Activated T-helper 2 cell treated with anti-CD3 and anti-CD28 coated beads, Interferon-gamma antibody, Interleukin-2, Interleukin-4, amounts not matched to agents 10 μg/mL and 5 μg/mL and 100 μg/mL, durations not matched to agents 14 hours and 24 hours and 36 hours (primary cell): ENCODE measurements at regions of chr1 and their contacts with region 1.

Region 1: DNA sequence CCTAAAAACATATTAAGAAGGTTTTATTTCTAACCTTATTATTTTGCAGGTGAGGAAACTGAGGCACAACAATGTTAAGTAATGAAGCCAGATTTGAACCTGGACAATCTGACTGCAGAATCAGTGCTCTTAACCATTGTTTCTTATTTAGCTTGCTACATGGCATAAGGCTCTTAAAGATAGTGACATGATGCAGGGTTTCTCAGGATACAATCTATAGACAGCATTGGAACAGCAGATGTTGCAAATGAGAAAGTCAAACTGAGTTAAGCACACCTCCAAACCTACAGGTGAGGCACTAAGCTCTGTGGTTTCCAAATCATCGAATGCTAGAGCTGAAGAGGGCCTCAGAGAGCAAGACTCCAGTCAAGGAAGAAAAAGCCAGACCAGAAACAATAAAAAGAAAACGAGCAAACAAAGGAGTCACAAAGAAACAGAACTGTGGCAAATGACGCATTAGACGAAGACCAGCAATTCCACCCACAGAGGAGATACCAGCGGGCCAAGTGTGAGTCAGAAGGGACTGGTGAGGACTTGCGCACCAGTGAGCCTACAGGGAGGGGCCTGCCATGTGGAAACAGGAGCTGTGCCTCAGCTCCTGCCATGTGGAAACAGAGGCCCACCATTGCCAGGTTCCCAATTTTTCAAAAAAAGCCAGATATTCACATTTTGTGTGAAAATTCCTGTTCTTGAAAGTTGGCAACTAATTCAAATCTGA is 14.4 kb downstream of the CD58 start:
- DNase-seq: peak; percentile 63
- H3K4me3 Mint-ChIP-seq: peak overlapping the region; percentile 2
- H3K27ac Mint-ChIP-seq: peak overlapping the region; percentile 93
- H3K4me1 Mint-ChIP-seq: peaks cover 75% of the 10 kb centered on the region
- H3K27me3 Mint-ChIP-seq: no peaks in the 10 kb centered on the region

Region 2: DNA sequence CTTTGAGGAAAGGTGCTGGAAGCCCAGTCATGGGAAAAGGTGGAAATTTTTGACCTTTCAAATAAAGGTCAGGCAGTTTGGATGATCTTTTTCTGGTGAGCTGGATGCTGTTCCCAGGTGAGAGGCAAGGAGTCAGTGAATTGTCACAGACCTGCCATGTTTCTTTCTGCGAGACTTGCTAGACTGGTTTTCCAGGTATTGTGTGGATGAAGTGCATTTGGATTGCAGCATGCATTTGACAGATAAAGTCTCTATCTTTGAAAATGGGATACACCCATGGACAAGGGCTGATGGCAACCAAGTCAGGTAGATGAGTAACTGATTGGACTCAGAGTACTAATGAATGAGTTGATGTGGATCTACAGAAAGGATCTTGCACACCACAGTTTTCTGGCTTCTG is 649.8 kb before region 1 on chr1:
- intact Hi-C with region 1: no loop called
- DNase-seq: no peak
- H3K4me3 Mint-ChIP-seq: no peak overlapping the region
- H3K27ac Mint-ChIP-seq: no peak overlapping the region
- H3K4me1 Mint-ChIP-seq: peaks cover 3% of the 10 kb centered on the region
- H3K27me3 Mint-ChIP-seq: peaks cover 23% of the 10 kb centered on the region

Region 3: GRCh38 chr1:116104667-116105205 is 451.7 kb before region 1 on chr1:
- intact Hi-C with region 1: no loop called
- DNase-seq: no peak
- H3K4me3 Mint-ChIP-seq: no peak overlapping the region
- H3K27ac Mint-ChIP-seq: no peak overlapping the region
- H3K4me1 Mint-ChIP-seq: no peaks in the 10 kb centered on the region
- H3K27me3 Mint-ChIP-seq: peaks cover 7% of the 10 kb centered on the region

Region 4: DNA sequence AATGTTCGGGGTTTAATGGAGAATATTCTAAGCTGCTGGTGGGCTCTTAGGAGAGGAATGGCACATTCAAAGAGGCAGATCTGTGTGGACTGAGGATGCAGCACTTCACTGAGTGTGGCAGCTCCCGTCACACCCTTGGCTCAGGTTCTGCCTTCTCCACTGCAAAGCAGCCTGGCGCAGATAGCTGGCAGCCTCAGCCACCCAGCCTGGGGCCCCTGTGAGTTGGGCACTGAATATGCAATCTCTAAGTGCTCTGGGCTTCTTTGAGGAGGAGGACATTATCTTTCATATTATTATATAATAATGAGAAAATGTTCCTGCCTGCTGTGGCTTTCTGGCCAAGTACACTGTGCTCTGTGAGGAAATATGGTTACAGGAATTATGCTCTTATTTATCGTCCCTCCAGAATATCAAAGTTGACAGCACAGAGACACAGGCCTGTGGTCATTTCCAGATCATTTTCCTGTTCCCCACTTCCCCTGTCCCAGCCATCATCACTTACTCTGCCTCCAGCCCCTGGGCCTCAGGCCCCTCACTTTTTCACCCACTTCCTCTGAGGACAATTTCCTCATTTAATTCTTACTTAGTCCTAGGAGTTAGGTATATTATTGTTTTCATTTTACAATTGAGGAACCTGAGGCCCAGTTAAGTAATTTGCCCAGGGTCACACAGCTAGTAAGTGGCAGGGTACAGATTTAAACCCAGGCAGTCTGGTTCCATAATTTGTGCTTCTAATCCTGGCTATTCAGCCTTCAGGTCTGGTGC is 391.7 kb before region 1 on chr1:
- intact Hi-C with region 1: no loop called
- DNase-seq: peak; percentile 3
- H3K4me3 Mint-ChIP-seq: no peak overlapping the region
- H3K27ac Mint-ChIP-seq: no peak overlapping the region
- H3K4me1 Mint-ChIP-seq: peaks cover 6% of the 10 kb centered on the region
- H3K27me3 Mint-ChIP-seq: peaks cover 12% of the 10 kb centered on the region

Region 5: GRCh38 chr1:116465845-116466685 is 90.4 kb before region 1 on chr1:
- intact Hi-C with region 1: no loop called
- DNase-seq: no peak
- H3K4me3 Mint-ChIP-seq: no peak overlapping the region
- H3K27ac Mint-ChIP-seq: no peak overlapping the region
- H3K4me1 Mint-ChIP-seq: no peaks in the 10 kb centered on the region
- H3K27me3 Mint-ChIP-seq: peaks cover 21% of the 10 kb centered on the region

Region 6: DNA sequence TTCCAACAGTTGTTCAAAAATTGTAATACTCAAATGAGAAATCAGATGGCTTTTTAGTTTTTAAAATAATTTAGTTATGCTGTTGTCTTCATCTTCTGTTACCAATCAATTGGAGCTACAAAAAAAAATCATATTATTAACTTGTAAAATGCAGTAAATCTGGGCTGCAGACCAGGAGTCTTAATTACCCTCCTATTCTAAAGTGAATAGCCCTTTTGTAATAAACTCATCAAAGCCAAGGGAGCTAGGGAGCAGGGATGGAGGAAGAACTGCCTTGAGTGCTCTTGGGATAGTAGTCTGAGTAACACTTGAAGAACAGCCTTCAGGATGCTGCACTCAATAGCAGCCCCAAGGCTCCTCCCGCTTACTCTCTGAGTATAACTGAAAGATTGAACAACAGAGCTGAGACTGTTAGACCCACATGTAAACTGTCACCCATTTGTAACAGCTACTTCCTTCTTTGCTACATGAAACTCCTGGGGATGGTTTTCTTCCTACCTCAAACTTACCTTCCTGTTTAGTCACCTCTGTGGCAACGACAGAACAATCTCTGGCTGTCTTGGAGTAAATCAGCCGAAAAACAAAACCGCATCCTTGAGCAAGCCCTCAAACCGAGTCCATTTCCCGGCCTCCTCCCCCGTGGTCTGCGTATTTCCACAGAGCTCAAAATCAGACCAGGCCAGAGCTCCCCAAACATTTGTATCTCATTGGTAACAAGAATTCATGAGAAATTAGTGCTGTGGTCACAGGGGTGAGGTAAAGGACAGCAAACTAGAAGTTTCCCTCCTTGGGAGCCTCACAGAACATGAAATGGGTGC is 41.5 kb before region 1 on chr1:
- intact Hi-C with region 1: loop called (anchors 2 kb)
- DNase-seq: peak; percentile 68
- H3K4me3 Mint-ChIP-seq: peak overlapping the region; percentile 50
- H3K27ac Mint-ChIP-seq: peak overlapping the region; percentile 94
- H3K4me1 Mint-ChIP-seq: peaks cover 63% of the 10 kb centered on the region
- H3K27me3 Mint-ChIP-seq: no peaks in the 10 kb centered on the region

Region 7: DNA sequence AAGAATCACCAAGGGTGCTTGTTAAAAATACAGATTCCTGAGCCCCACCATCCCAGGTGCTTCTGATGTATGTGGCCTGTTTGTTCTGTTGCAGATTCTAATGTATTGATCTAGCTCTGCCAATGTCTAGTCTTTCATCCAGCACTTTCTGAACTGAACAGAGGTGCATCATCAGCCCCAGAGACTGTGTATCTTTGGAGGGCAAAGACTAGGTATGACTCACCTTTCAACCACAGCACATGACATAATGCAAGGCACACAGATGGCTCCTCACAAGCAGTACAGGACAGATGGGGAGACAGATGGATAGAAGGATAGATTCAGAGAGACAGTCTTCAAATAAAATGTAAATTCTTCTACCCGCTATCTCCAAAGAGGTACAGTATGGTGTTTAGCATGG is 17.9 kb before region 1 on chr1:
- intact Hi-C with region 1: loop called (anchors 2 kb)
- DNase-seq: peak; percentile 40
- H3K4me3 Mint-ChIP-seq: no peak overlapping the region
- H3K27ac Mint-ChIP-seq: peak overlapping the region; percentile 62
- H3K4me1 Mint-ChIP-seq: peaks cover 54% of the 10 kb centered on the region
- H3K27me3 Mint-ChIP-seq: no peaks in the 10 kb centered on the region

Region 8: GRCh38 chr1:116544588-116545358 is 11.7 kb before region 1 on chr1:
- intact Hi-C with region 1: loop called (anchors 1 kb)
- DNase-seq: no peak
- H3K4me3 Mint-ChIP-seq: peak overlapping the region; percentile 69
- H3K27ac Mint-ChIP-seq: peak overlapping the region; percentile 98
- H3K4me1 Mint-ChIP-seq: peaks cover 71% of the 10 kb centered on the region
- H3K27me3 Mint-ChIP-seq: no peaks in the 10 kb centered on the region

Region 9: DNA sequence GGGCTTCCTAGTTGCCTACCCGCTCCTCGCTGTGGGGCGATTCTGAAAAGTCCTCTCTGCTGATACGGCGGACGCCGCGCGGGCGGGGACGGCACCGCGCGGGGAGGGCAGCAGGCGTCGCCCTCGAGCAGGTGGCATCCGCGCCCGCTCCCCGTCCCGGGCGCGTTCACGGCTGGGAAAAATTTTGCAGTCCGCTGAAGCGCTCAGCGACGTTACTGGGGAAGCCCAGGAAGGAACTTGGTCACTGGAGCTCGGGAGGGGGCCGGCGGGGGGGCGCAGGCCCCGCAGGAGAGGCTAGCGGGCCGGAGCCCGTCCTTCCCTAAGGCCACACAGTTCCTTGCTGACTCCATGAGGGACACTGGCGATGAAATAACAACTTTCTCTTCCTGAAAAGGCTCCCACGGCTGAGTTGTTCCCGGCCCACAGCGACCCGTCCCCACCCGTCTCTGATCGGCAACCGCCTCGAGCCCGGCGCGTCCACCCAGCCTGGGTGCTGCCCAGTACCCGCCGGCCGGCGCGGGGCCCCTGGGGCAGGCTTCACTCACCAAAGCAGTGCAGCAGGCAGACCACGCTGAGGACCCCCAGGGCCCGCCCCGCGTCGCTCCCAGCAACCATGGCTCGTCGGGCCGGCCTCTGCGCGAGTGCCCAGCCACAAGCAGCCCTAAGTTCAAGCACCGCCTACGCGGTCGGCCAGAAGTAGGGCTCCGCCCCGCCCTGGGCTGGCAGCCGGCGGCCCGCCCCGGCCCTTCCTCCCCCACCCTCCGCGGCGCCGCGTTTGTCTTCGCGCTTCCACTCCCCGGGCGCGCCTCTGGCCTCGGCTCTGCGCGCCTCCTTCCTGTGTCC is 14.1 kb after region 1 on chr1 and contains the start of gene CD58:
- intact Hi-C with region 1: loop called (anchors 1 kb)
- DNase-seq: peak; percentile 78
- H3K4me3 Mint-ChIP-seq: peak within 1 kb of the TSS; percentile 97
- H3K27ac Mint-ChIP-seq: peak within 1 kb of the TSS; percentile 91
- H3K4me1 Mint-ChIP-seq: peaks cover 65% of the 10 kb centered on the region
- H3K27me3 Mint-ChIP-seq: no peaks in the 10 kb centered on the region
- total RNA-seq, gene CD58: 40.6 and 40.9 TPM in 2 replicates

Region 10: GRCh38 chr1:116763787-116764465 is 207.5 kb after region 1 on chr1:
- intact Hi-C with region 1: loop called (anchors 5 kb)
- DNase-seq: no peak
- H3K4me3 Mint-ChIP-seq: peak overlapping the region; percentile 84
- H3K27ac Mint-ChIP-seq: peak overlapping the region; percentile 100
- H3K4me1 Mint-ChIP-seq: peaks cover 88% of the 10 kb centered on the region
- H3K27me3 Mint-ChIP-seq: no peaks in the 10 kb centered on the region

Region 11: GRCh38 chr1:116806245-116806644 is 249.8 kb after region 1 on chr1:
- intact Hi-C with region 1: loop called (anchors 5 kb)
- DNase-seq: peak; percentile 36
- H3K4me3 Mint-ChIP-seq: peak overlapping the region; percentile 79
- H3K27ac Mint-ChIP-seq: peak overlapping the region; percentile 90
- H3K4me1 Mint-ChIP-seq: peaks cover 84% of the 10 kb centered on the region
- H3K27me3 Mint-ChIP-seq: no peaks in the 10 kb centered on the region